MCF 10A (cell line): ENCODE measurements at regions of chr1 and their contacts with region 1.

Region 1: GRCh38 chr1:84620720-84621313 is 46.6 kb upstream of the CTBS start:
- DNase-seq: peak; percentile 75
- H3K4me3 Mint-ChIP-seq: peak overlapping the region; percentile 81
- H3K27ac Mint-ChIP-seq: peak overlapping the region; percentile 78
- H3K4me1 Mint-ChIP-seq: peaks cover 12% of the 10 kb centered on the region
- H3K27me3 Mint-ChIP-seq: no peaks in the 10 kb centered on the region
- CTCF ChIP-seq: peak; percentile 97

Region 2: GRCh38 chr1:84143796-84144565 is 476.8 kb before region 1 on chr1 and contains the start of gene PRKACB:
- CTCF ChIA-PET with region 1: interaction called, 6 read pairs
- POLR2A ChIA-PET with region 1: no interaction called
- intact Hi-C with region 1: loop called (anchors 2 kb)
- DNase-seq: peak; percentile 9
- H3K4me3 Mint-ChIP-seq: no peak within 1 kb of the TSS
- H3K27ac Mint-ChIP-seq: no peak within 1 kb of the TSS
- H3K4me1 Mint-ChIP-seq: no peaks in the 10 kb centered on the region
- H3K27me3 Mint-ChIP-seq: no peaks in the 10 kb centered on the region
- CTCF ChIP-seq: no peak
- total RNA-seq, gene PRKACB: 12.8 and 14.8 TPM in 2 replicates

Region 3: GRCh38 chr1:84442256-84442655 is 178.6 kb before region 1 on chr1:
- CTCF ChIA-PET with region 1: interaction called, 16 read pairs
- POLR2A ChIA-PET with region 1: no interaction called
- intact Hi-C with region 1: no loop called
- DNase-seq: peak; percentile 87
- H3K4me3 Mint-ChIP-seq: no peak overlapping the region
- H3K27ac Mint-ChIP-seq: no peak overlapping the region
- H3K4me1 Mint-ChIP-seq: no peaks in the 10 kb centered on the region
- H3K27me3 Mint-ChIP-seq: no peaks in the 10 kb centered on the region
- CTCF ChIP-seq: peak; percentile 39

Region 4: GRCh38 chr1:84573967-84574842 is 46.6 kb before region 1 on chr1 and contains the start of gene CTBS:
- CTCF ChIA-PET with region 1: interaction called, 11 read pairs
- POLR2A ChIA-PET with region 1: interaction called, 32 read pairs
- intact Hi-C with region 1: loop called (anchors 1 kb)
- DNase-seq: peak; percentile 79
- H3K4me3 Mint-ChIP-seq: peak within 1 kb of the TSS; percentile 95
- H3K27ac Mint-ChIP-seq: peak within 1 kb of the TSS; percentile 99
- H3K4me1 Mint-ChIP-seq: peaks cover 36% of the 10 kb centered on the region
- H3K27me3 Mint-ChIP-seq: no peaks in the 10 kb centered on the region
- CTCF ChIP-seq: no peak
- total RNA-seq, gene CTBS: 14.0 and 20.9 TPM in 2 replicates

Region 5: DNA sequence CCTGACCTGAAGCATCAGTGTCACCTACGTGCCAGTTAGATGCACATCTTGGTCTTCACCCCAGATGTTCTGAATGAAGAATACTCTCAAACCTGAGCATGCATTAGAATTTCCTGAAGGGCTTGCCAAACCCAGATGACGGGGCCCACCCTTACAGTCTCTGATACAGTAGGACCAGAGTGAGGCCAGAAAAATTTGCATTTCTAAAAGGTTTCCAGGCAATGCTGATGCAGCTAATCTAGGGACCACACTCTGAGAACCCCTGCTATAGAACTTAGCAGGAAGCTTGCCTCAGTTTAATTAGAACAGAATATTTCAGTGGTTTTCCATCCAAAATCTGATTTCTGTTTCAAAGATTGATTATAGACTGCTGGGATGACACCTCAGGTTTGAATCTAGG is 36.7 kb before region 1 on chr1:
- CTCF ChIA-PET with region 1: interaction called, 10 read pairs
- POLR2A ChIA-PET with region 1: interaction called, 3 read pairs
- intact Hi-C with region 1: no loop called
- DNase-seq: no peak
- H3K4me3 Mint-ChIP-seq: no peak overlapping the region
- H3K27ac Mint-ChIP-seq: no peak overlapping the region
- H3K4me1 Mint-ChIP-seq: no peaks in the 10 kb centered on the region
- H3K27me3 Mint-ChIP-seq: no peaks in the 10 kb centered on the region
- CTCF ChIP-seq: no peak

Region 6: DNA sequence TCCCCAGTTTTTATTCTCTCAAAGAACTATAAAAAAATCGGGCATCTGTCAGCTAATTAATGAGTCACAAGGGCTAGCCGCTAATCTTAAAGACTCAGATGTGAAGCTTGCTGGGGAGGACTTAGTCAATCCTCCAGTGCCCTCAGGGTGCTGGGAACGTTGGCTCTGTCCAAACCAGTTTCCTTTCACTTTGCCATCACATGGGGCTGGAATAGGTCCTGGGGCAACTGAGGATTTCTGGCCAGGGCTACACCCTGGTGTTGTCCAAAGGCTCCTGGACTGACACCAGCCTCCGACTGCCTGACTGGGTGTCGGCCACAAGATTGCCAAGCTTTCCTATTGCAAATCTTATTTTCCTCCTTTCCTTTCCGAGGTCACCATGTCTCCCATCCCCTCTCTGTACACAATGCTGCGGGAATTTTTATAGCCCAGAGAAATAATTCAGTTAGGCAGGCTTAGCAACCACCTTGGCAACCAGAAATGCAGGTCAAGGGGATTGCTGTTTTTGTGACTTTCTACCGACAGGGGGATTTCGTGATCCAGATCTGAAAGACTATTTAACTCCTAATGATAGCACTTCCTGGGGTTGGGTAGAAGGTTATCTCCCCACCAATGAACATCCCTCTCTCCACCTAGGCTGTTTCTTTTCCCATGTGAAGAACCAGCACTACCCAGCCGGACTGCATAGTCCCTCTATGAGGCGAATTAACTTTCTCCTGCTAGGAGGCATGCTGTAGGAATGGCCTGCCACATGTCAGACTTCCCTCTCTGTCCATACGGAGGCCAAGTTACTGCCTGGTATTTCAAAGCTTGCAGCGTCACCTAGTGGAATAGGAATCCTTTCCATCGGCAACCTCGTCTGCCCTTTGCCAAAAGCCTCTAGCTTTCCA is 16.6 kb before region 1 on chr1:
- CTCF ChIA-PET with region 1: interaction called, 22 read pairs
- POLR2A ChIA-PET with region 1: interaction called, 12 read pairs
- intact Hi-C with region 1: no loop called
- DNase-seq: peak; percentile 96
- H3K4me3 Mint-ChIP-seq: peak overlapping the region; percentile 73
- H3K27ac Mint-ChIP-seq: peak overlapping the region; percentile 76
- H3K4me1 Mint-ChIP-seq: peaks cover 26% of the 10 kb centered on the region
- H3K27me3 Mint-ChIP-seq: no peaks in the 10 kb centered on the region
- CTCF ChIP-seq: peak; percentile 11

Region 7: GRCh38 chr1:84936116-84936810 is 315.4 kb after region 1 on chr1:
- CTCF ChIA-PET with region 1: no interaction called
- POLR2A ChIA-PET with region 1: no interaction called
- intact Hi-C with region 1: loop called (anchors 5 kb)
- DNase-seq: peak; percentile 78
- H3K4me3 Mint-ChIP-seq: no peak overlapping the region
- H3K27ac Mint-ChIP-seq: no peak overlapping the region
- H3K4me1 Mint-ChIP-seq: no peaks in the 10 kb centered on the region
- H3K27me3 Mint-ChIP-seq: no peaks in the 10 kb centered on the region
- CTCF ChIP-seq: peak; percentile 89